ENCODE measurements at regions of chr3 and their contacts with region 1.

Region 1: DNA sequence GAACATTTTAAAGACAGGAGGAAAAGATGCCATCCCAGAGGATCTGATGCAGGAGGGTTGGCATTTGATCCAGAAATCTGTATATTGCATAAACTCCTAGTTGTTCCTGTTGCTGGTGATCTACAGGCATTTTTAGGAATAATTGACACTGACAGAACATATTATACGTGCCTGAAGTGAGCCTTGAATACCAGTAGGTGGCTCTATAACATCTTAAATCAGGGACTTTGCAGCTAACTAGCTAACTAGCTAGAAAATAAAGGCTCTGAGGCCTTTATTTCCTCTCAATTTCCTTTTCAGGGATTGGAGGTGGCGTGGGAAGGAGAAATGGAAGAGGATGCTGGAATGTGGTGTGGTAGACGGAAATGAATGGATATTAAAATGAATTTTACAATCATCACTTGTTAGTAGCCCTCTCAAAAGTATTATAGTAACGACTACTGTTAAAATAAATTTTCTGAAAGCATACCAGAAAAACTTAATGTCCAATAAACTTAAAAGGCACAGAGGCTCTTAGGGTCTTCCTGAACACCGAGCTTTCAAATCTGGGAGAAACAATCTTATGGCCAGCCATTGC is 73.9 kb upstream of the ZBED2 start:
- DNase-seq: peak in 7 of 9 donors; percentile 22 to 64 (median 53)
- ATAC-seq: peak; percentile 53
- H3K4me3 ChIP-seq: no peak overlapping the region
- H3K4me3 Mint-ChIP-seq: peak overlapping the region in 8 of 10 donors; percentile 20 to 74 (median 36)
- H3K27ac ChIP-seq: peak overlapping the region; percentile 14
- H3K27ac Mint-ChIP-seq: peak overlapping the region; percentile 26 to 94 (median 76)
- H3K4me1 ChIP-seq: peaks cover 52 to 59% of the 10 kb centered on the region in 2 donors
- H3K4me1 Mint-ChIP-seq: peaks cover 46 to 91% (median 85%) of the 10 kb centered on the region in 7 donors
- H3K27me3 ChIP-seq: no peaks in the 10 kb centered on the region
- H3K27me3 Mint-ChIP-seq: no peaks in the 10 kb centered on the region

Region 2: GRCh38 chr3:111071257-111072015 is 597.6 kb before region 1 on chr3 and contains the start of gene NECTIN3:
- CTCF ChIA-PET with region 1: no interaction called
- POLR2A ChIA-PET with region 1: no interaction called
- intact Hi-C with region 1: loop called in 1 of 2 experiments (anchors 1 kb)
- DNase-seq: peak; percentile 59 to 89 (median 80)
- ATAC-seq: peak; percentile 96
- H3K4me3 ChIP-seq: peak within 1 kb of the TSS; percentile 76
- H3K4me3 Mint-ChIP-seq: peak within 1 kb of the TSS; percentile 90 to 98 (median 94)
- H3K27ac ChIP-seq: peak within 1 kb of the TSS; percentile 52
- H3K27ac Mint-ChIP-seq: peak within 1 kb of the TSS; percentile 63 to 91 (median 87)
- H3K4me1 ChIP-seq: peaks cover 9% of the 10 kb centered on the region in 2 donors
- H3K4me1 Mint-ChIP-seq: peaks cover 24 to 34% (median 26%) of the 10 kb centered on the region in 7 donors
- H3K27me3 ChIP-seq: peaks cover 0 to 6% of the 10 kb centered on the region in 2 donors
- H3K27me3 Mint-ChIP-seq: peaks cover 29 to 64% (median 36%) of the 10 kb centered on the region in 5 donors
- total RNA-seq, gene NECTIN3: 2.4 to 7.2 (median 4.6) TPM

Region 3: GRCh38 chr3:111521891-111522290 is 147.1 kb before region 1 on chr3:
- CTCF ChIA-PET with region 1: no interaction called
- POLR2A ChIA-PET with region 1: no interaction called
- intact Hi-C with region 1: no loop called
- DNase-seq: no peak
- ATAC-seq: no peak
- H3K4me3 ChIP-seq: no peak overlapping the region
- H3K4me3 Mint-ChIP-seq: no peak overlapping the region
- H3K27ac ChIP-seq: no peak overlapping the region
- H3K27ac Mint-ChIP-seq: peak overlapping the region in 1 of 9 donors; percentile 17
- H3K4me1 ChIP-seq: no peaks in the 10 kb centered on the region
- H3K4me1 Mint-ChIP-seq: peaks cover 0 to 4% (median 0%) of the 10 kb centered on the region in 7 donors
- H3K27me3 ChIP-seq: no peaks in the 10 kb centered on the region
- H3K27me3 Mint-ChIP-seq: no peaks in the 10 kb centered on the region

Region 4: GRCh38 chr3:111547631-111548030 is 121.4 kb before region 1 on chr3:
- CTCF ChIA-PET with region 1: interaction called, 3 read pairs
- POLR2A ChIA-PET with region 1: interaction called, 19 read pairs
- intact Hi-C with region 1: loop called (anchors 1 kb)
- DNase-seq: peak in 8 of 9 donors; percentile 44 to 88 (median 82)
- ATAC-seq: peak; percentile 89
- H3K4me3 ChIP-seq: peak overlapping the region; percentile 48
- H3K4me3 Mint-ChIP-seq: no peak overlapping the region
- H3K27ac ChIP-seq: peak overlapping the region; percentile 94
- H3K27ac Mint-ChIP-seq: no peak overlapping the region
- H3K4me1 ChIP-seq: peaks cover 66 to 81% of the 10 kb centered on the region in 2 donors
- H3K4me1 Mint-ChIP-seq: peaks cover 0 to 34% (median 4%) of the 10 kb centered on the region in 7 donors
- H3K27me3 ChIP-seq: no peaks in the 10 kb centered on the region
- H3K27me3 Mint-ChIP-seq: no peaks in the 10 kb centered on the region

Region 5: DNA sequence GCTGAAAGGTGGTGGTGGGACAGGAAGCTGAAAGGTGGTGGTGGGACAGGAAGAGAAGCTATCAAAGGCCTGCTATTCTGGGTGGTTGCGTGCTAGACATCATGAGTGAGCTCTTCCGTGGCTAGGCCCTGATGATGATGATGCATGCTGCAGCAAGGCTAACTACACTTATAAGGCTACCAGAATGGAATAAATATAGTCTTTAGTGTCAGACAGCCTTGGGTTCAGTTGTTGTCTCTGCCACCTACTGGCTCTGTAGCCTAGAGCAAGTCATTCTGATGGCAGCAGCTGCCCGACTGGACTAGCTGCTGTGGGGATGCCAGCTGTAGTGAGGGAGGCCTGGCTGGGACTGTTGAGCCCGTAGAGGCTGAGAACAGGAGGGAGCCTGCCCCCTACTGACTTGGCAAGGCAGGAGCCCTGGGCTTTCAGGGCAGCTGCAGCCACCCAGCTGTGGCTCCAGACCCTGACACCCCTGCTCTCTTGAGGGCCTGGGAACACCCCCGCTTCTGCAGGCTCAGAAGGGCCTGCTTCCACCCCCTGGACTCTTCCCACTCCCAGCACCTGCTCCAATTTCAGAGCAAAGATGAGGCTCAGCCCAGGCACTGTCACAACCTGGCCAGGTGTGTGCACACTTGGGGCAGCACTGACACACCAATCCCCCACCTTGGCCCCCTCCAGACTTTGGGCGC is 52.4 kb before region 1 on chr3:
- CTCF ChIA-PET with region 1: no interaction called
- POLR2A ChIA-PET with region 1: interaction called, 3 read pairs
- intact Hi-C with region 1: loop called in 1 of 2 experiments (anchors 1 kb)
- DNase-seq: peak in 8 of 9 donors; percentile 40 to 71 (median 66)
- ATAC-seq: peak; percentile 92
- H3K4me3 ChIP-seq: no peak overlapping the region
- H3K4me3 Mint-ChIP-seq: peak overlapping the region; percentile 2 to 64 (median 39)
- H3K27ac ChIP-seq: peak overlapping the region; percentile 43
- H3K27ac Mint-ChIP-seq: peak overlapping the region; percentile 52 to 95 (median 78)
- H3K4me1 ChIP-seq: peaks cover 21 to 32% of the 10 kb centered on the region in 2 donors
- H3K4me1 Mint-ChIP-seq: peaks cover 30 to 71% (median 58%) of the 10 kb centered on the region in 7 donors
- H3K27me3 ChIP-seq: no peaks in the 10 kb centered on the region
- H3K27me3 Mint-ChIP-seq: no peaks in the 10 kb centered on the region

Region 6: DNA sequence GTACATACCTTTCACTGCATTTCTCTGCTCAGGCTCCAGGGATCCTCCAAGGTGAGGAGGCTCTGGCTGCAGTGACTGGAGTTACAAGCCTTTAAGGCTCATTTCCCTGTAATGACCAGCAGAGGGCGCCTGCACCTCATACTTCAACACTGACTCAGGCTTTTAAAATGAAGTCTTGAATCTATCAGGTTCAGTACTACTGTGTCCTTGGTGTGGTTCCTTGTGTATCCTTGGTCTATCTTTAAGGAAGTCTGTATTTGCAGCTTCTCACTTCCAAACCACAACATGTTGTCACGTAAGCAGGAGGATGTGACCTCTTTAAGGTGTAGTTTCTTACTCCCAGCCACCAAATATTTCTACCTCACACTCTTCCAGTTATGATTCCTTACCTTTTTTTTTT is 48.6 kb after region 1 on chr3:
- CTCF ChIA-PET with region 1: interaction called, 5 read pairs
- POLR2A ChIA-PET with region 1: no interaction called
- intact Hi-C with region 1: loop called (anchors 1 kb)
- DNase-seq: peak; percentile 27 to 69 (median 60)
- ATAC-seq: peak; percentile 95
- H3K4me3 ChIP-seq: no peak overlapping the region
- H3K4me3 Mint-ChIP-seq: no peak overlapping the region
- H3K27ac ChIP-seq: no peak overlapping the region
- H3K27ac Mint-ChIP-seq: peak overlapping the region in 5 of 9 donors; percentile 6 to 81 (median 76)
- H3K4me1 ChIP-seq: peaks cover 0 to 5% of the 10 kb centered on the region in 2 donors
- H3K4me1 Mint-ChIP-seq: peaks cover 0 to 6% (median 6%) of the 10 kb centered on the region in 7 donors
- H3K27me3 ChIP-seq: no peaks in the 10 kb centered on the region
- H3K27me3 Mint-ChIP-seq: no peaks in the 10 kb centered on the region

Region 7: GRCh38 chr3:112013058-112013783 is 344.2 kb after region 1 on chr3:
- CTCF ChIA-PET with region 1: interaction called, 16 read pairs
- POLR2A ChIA-PET with region 1: interaction called, 3 read pairs
- intact Hi-C with region 1: loop called (anchors 1 kb)
- DNase-seq: peak in 8 of 9 donors; percentile 30 to 63 (median 55)
- ATAC-seq: peak; percentile 88
- H3K4me3 ChIP-seq: no peak overlapping the region
- H3K4me3 Mint-ChIP-seq: peak overlapping the region in 4 of 10 donors; percentile 24 to 70 (median 26)
- H3K27ac ChIP-seq: no peak overlapping the region
- H3K27ac Mint-ChIP-seq: peak overlapping the region in 2 of 9 donors; percentile 42 to 83
- H3K4me1 ChIP-seq: no peaks in the 10 kb centered on the region
- H3K4me1 Mint-ChIP-seq: peaks cover 0 to 20% (median 10%) of the 10 kb centered on the region in 7 donors
- H3K27me3 ChIP-seq: no peaks in the 10 kb centered on the region
- H3K27me3 Mint-ChIP-seq: no peaks in the 10 kb centered on the region

Region 8: GRCh38 chr3:112498914-112499711 is 830.1 kb after region 1 on chr3 and contains the start of gene BTLA:
- CTCF ChIA-PET with region 1: no interaction called
- POLR2A ChIA-PET with region 1: no interaction called
- intact Hi-C with region 1: loop called in 1 of 2 experiments (anchors 10 kb)
- DNase-seq: peak in 7 of 9 donors; percentile 45 to 65 (median 50)
- ATAC-seq: peak; percentile 81
- H3K4me3 ChIP-seq: peak within 1 kb of the TSS; percentile 80
- H3K4me3 Mint-ChIP-seq: peak within 1 kb of the TSS; percentile 85 to 100 (median 97)
- H3K27ac ChIP-seq: peak within 1 kb of the TSS; percentile 68
- H3K27ac Mint-ChIP-seq: peak within 1 kb of the TSS; percentile 88 to 99 (median 94)
- H3K4me1 ChIP-seq: peaks cover 14 to 26% of the 10 kb centered on the region in 2 donors
- H3K4me1 Mint-ChIP-seq: peaks cover 34 to 63% (median 55%) of the 10 kb centered on the region in 7 donors
- H3K27me3 ChIP-seq: no peaks in the 10 kb centered on the region
- H3K27me3 Mint-ChIP-seq: no peaks in the 10 kb centered on the region
- total RNA-seq, gene BTLA: 15.6 to 29.5 (median 26.1) TPM

Measured in naive thymus-derived CD4-positive, alpha-beta T cell (primary cell).